SK-N-SH (cell line): ENCODE measurements at regions of chr1 and their contacts with region 1.

Region 1: GRCh38 chr1:36342481-36343478 is 19.3 kb upstream of the EVA1B start:
- DNase-seq: peak; percentile 77
- H3K4me3 ChIP-seq: no peak overlapping the region
- H3K27ac ChIP-seq: peak overlapping the region in 1 of 2 experiments; percentile 87; a peak in 2 of 4 replicates
- H3K4me1 ChIP-seq: peaks cover 0 to 10% of the 10 kb centered on the region in 2 experiments; a peak in 3 of 4 replicates
- H3K27me3 ChIP-seq: no peaks in the 10 kb centered on the region
- CTCF ChIP-seq: peak; percentile 89
- EP300 ChIP-seq: peak in 1 of 2 experiments; percentile 62; a peak in 1 of 4 replicates
- RAD21 ChIP-seq: peak; percentile 85

Region 2: DNA sequence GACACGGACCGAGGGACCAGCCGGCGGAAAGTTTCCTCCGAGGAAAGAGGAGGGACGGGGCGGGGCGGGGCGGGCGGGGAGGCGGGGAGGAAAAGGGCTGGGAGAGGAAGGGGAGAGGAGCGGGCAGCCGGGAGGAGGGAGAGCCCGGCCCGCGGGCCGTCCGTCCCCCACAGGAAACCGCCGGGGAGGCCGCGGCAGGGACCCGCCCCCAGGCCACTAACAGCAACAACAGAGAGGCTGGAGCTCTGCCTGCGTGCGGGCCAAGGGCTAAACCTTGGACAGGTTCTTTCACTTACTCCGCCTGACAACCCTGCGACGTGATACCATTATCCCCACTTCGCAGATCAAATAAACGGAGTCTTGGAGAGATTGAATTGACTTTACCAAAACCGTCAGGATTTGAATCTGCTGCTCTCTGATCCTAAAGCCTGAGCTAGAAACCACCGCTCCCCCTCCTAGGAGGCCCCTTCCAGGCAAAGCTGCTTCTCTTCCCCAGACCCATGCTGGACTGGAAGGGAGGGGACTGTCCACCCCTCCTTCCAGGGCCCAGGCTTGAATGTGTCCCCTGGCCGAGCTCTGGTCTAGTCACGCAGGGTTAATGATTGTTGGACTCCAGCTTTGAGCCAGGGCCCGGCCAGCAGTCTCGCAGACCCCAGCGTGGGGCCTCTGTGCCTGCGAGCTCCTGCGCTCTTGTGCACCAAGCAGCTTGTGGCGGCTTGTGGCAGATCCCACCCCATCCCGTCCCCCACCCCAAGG is 19.0 kb before region 1 on chr1 and contains the start of gene EVA1B:
- CTCF ChIA-PET with region 1: interaction called, 29 read pairs
- POLR2A ChIA-PET with region 1: no interaction called
- DNase-seq: peak; percentile 90
- H3K4me3 ChIP-seq: peak within 1 kb of the TSS; percentile 78
- H3K27ac ChIP-seq: peak within 1 kb of the TSS; percentile 62 to 70
- H3K4me1 ChIP-seq: peaks cover 9 to 24% of the 10 kb centered on the region in 2 experiments; a peak in 1 of 4 replicates
- H3K27me3 ChIP-seq: no peaks in the 10 kb centered on the region
- CTCF ChIP-seq: no peak
- EP300 ChIP-seq: no peak
- RAD21 ChIP-seq: no peak
- polyA plus RNA-seq, gene EVA1B: 34.1 and 38.9 TPM in 2 replicates

Region 3: DNA sequence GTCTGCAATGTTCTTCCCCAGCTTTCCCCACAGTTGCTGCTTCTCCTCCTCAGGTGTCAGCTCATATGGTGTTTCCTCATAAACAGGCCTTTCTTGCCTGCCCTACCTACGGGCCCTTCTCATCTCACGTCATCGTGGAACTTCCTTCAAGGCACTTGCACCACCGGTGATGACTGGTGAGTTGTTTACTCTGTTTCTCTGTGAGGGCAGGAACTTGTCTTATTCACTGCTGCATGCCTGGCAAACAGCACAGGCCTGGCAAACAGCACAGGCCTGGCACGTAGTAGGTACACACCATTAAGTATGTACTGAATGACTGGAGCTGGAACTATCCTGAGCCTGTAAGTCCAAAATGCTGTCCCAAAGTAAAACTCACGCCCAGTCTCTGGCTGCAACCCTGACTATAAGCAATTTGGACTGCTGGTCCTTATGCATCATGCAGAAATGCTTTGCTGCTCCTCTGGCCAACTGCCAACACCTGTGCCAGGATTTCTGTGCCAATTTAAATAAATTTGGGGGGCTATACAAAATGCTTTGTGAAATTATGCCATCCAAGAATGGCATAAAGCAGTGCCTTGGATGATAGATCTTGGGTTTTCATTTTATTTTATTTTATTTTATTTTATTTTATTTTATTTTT is 17.3 kb after region 1 on chr1:
- CTCF ChIA-PET with region 1: interaction called, 103 read pairs
- POLR2A ChIA-PET with region 1: no interaction called
- DNase-seq: no peak
- H3K4me3 ChIP-seq: no peak overlapping the region
- H3K27ac ChIP-seq: peak overlapping the region in 1 of 2 experiments; percentile 11; a peak in 2 of 4 replicates
- H3K4me1 ChIP-seq: peaks cover 0 to under 1% of the 10 kb centered on the region in 2 experiments; a peak in 1 of 4 replicates
- H3K27me3 ChIP-seq: no peaks in the 10 kb centered on the region
- CTCF ChIP-seq: no peak
- EP300 ChIP-seq: no peak
- RAD21 ChIP-seq: no peak

Region 4: GRCh38 chr1:36369061-36369861 is 26.5 kb after region 1 on chr1:
- CTCF ChIA-PET with region 1: interaction called, 103 read pairs
- POLR2A ChIA-PET with region 1: no interaction called
- DNase-seq: peak; percentile 84
- H3K4me3 ChIP-seq: peak overlapping the region in 1 of 2 experiments; percentile 26; a peak in 1 of 4 replicates
- H3K27ac ChIP-seq: peak overlapping the region; percentile 5 to 99; a peak in 3 of 4 replicates
- H3K4me1 ChIP-seq: peaks cover 39 to 62% of the 10 kb centered on the region in 2 experiments
- H3K27me3 ChIP-seq: no peaks in the 10 kb centered on the region
- CTCF ChIP-seq: peak; percentile 85
- EP300 ChIP-seq: no peak
- RAD21 ChIP-seq: peak; percentile 72

Region 5: GRCh38 chr1:36411674-36412520 is 69.1 kb after region 1 on chr1:
- CTCF ChIA-PET with region 1: interaction called, 14 read pairs
- POLR2A ChIA-PET with region 1: no interaction called
- DNase-seq: no peak
- H3K4me3 ChIP-seq: no peak overlapping the region
- H3K27ac ChIP-seq: no peak overlapping the region
- H3K4me1 ChIP-seq: peaks cover 0 to 4% of the 10 kb centered on the region in 2 experiments; a peak in 1 of 4 replicates
- H3K27me3 ChIP-seq: no peaks in the 10 kb centered on the region
- CTCF ChIP-seq: peak; percentile 8; the same call in 1 of the 2 replicates
- EP300 ChIP-seq: no peak
- RAD21 ChIP-seq: no peak

Region 6: DNA sequence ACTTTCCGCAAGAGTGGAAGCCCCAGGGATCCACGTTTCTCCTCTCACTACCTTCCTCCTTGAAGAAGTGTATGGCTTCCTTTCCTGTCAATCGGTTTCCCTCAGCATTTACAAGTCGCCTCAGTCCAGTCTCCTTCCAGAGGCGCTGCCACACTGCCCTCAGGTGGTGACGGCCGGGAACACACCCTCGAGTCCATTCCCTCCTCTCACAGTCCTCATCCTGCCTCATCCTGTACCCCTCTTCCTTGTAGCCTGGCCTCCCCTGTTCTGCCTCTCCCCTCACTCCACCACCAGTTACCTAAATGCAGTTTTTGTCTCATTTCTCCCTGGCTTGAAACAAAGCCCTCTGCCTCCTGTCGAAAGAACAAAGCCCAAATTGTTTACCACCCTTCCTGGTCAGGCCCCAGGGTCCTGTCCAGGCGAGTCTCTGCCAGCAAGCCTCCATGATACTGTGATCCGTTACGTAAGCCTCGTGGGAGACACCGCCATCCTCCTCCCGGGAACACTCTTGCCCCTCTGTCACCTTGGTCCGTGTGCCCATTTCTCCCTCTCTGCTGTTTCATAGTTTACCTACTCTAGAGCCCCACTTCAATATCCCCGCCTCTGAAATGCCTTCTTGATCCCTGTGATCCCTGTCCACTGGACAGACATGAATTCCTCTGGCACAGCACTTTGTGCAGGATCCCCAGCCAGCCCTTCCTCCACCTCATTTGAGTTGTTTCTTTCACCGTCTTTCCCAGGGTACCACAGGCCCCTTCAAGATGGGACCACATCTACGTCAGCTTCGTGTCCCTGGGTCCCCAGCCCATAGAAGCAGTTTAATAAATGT is 78.3 kb after region 1 on chr1:
- CTCF ChIA-PET with region 1: interaction called, 38 read pairs
- POLR2A ChIA-PET with region 1: interaction called, 3 read pairs
- DNase-seq: peak; percentile 78
- H3K4me3 ChIP-seq: peak overlapping the region in 1 of 2 experiments; percentile 30; a peak in 1 of 4 replicates
- H3K27ac ChIP-seq: peak overlapping the region in 1 of 2 experiments; percentile 36; a peak in 1 of 4 replicates
- H3K4me1 ChIP-seq: peaks cover 0 to 5% of the 10 kb centered on the region in 2 experiments; a peak in 2 of 4 replicates
- H3K27me3 ChIP-seq: no peaks in the 10 kb centered on the region
- CTCF ChIP-seq: peak; percentile 92
- EP300 ChIP-seq: no peak
- RAD21 ChIP-seq: peak; percentile 99